Mucosa of descending colon (tissue), 3 donors: ENCODE measurements at regions of chr16 and their contacts with region 1.

Region 1: GRCh38 chr16:20300312-20301097 is 26.8 kb downstream of the GP2 start:
- DNase-seq: peak in 2 of 3 donors; percentile 51 to 52
- ATAC-seq: peak; percentile 92
- H3K4me3 ChIP-seq: no peak overlapping the region
- H3K4me1 ChIP-seq: no peaks in the 10 kb centered on the region
- CTCF ChIP-seq: peak; percentile 45

Region 2: GRCh38 chr16:19907161-19907992 is 393.1 kb before region 1 on chr16:
- intact Hi-C with region 1: loop called (anchors 2 to 10 kb)
- DNase-seq: peak in 2 of 3 donors; percentile 68 to 70
- ATAC-seq: peak; percentile 97
- H3K4me3 ChIP-seq: no peak overlapping the region
- H3K4me1 ChIP-seq: no peaks in the 10 kb centered on the region
- CTCF ChIP-seq: peak; percentile 94

Region 3: DNA sequence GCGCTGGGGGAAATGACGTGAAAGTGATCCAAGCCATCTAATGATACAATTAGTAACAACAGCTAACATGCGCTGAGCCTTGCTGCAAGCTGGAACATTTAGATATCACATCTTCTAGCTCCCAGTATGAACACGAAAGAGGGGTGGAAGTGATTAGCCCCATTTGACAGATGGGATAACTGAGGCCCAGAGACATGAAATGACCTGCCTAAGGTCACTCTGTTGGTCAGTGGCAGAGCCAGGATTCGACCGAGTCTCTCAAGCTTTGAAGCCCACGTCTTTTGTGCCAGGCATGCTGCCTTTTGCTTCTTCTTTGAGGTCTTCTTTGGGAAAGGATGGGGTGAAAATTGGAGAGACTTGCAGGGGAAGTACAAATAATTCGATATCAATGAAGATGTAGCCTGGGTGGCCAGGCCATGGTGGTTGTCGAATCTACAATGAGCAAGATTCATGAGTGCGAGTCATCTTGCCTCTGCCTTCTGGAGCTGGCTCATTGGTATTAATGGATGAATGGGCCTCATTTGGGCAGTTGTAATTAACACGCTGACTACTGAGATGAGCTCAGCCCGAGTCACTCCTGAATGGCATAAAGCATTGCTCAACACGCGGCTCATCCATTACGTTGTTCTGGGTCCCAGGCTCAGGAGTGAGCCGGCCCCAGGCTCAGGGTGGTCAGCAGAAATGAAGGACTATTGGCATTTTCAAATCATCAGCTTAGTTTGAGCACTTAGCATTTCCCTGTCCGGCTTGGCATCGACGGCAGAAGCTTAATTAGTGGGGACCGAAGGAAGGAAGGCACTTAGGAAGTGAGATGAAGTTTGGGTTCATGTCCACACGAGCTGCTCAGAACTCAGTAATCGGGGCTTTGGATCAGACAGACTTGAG is 387.8 kb before region 1 on chr16:
- intact Hi-C with region 1: loop called (anchors 2 to 10 kb)
- DNase-seq: no peak
- ATAC-seq: no peak
- H3K4me3 ChIP-seq: no peak overlapping the region
- H3K4me1 ChIP-seq: no peaks in the 10 kb centered on the region
- CTCF ChIP-seq: no peak

Region 4: GRCh38 chr16:20073203-20074098 is 227.1 kb before region 1 on chr16 and contains the start of gene GPR139:
- intact Hi-C with region 1: no loop called
- DNase-seq: no peak
- ATAC-seq: no peak
- H3K4me3 ChIP-seq: no peak within 1 kb of the TSS
- H3K4me1 ChIP-seq: no peaks in the 10 kb centered on the region
- CTCF ChIP-seq: no peak
- total RNA-seq, gene GPR139: not detected